ENCODE measurements at regions of chr14 and their contacts with region 1.

Region 1: GRCh38 chr14:105351920-105352851 is 37.6 kb downstream of the PACS2 start:
- DNase-seq: peak; percentile 40
- H3K4me3 ChIP-seq: no peak overlapping the region
- CTCF ChIP-seq: peak; percentile 88

Region 2: DNA sequence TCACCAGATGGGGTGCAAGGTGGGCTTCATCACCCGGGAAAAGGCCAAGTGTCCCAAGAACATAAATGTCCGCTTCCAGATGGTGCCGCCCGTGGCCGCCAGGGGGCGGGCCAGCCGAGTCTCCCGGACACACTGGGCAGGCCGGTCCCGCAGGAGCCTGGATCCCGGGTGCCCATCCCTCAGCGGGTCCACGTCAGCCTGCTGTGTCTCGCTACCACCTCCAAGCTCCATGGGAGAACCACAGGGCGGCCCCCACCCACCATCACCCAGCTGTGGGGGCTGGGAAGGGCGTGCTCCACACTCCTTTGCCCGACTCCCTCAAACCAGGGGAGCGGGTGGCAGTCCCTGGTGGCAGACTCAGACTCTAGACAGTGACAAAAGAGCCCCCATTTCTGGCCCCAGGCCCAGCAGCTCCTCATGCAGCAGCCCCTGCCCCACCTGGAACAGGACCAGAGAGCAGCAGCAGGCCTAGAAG is 149.1 kb before region 1 on chr14:
- CTCF ChIA-PET with region 1: interaction called, 32 read pairs
- POLR2A ChIA-PET with region 1: no interaction called
- DNase-seq: no peak
- H3K4me3 ChIP-seq: 0 out of 2 replicates have a peak overlapping the region, but pooled peaks have one; percentile 3
- CTCF ChIP-seq: peak; percentile 96

Region 3: DNA sequence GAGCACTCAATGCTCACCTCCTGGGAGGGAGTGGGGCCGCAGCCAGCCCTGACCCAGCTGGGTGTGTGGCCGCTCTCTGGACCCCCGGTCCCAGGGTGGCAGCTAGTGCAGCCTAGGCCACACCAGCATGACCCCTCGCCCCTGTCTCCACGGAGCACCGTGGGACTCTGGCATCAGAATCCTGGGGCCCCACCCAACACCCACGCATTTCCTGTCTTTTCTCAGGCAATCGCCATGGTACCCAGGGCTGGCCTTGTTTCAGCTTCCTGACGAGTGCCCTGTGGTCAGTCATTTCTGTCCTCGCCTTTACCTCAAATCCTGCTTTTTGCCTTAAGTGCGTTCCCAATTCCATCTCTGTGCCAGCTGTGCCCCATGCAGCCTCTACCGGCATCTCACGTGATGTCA is 21.7 kb before region 1 on chr14:
- CTCF ChIA-PET with region 1: interaction called, 10 read pairs
- POLR2A ChIA-PET with region 1: interaction called, 4 read pairs
- DNase-seq: no peak
- H3K4me3 ChIP-seq: no peak overlapping the region
- CTCF ChIP-seq: no peak

Region 4: GRCh38 chr14:105340821-105341733 is 11.1 kb before region 1 on chr14:
- CTCF ChIA-PET with region 1: interaction called, 26 read pairs
- POLR2A ChIA-PET with region 1: no interaction called
- DNase-seq: no peak
- H3K4me3 ChIP-seq: no peak overlapping the region
- CTCF ChIP-seq: no peak

Region 5: DNA sequence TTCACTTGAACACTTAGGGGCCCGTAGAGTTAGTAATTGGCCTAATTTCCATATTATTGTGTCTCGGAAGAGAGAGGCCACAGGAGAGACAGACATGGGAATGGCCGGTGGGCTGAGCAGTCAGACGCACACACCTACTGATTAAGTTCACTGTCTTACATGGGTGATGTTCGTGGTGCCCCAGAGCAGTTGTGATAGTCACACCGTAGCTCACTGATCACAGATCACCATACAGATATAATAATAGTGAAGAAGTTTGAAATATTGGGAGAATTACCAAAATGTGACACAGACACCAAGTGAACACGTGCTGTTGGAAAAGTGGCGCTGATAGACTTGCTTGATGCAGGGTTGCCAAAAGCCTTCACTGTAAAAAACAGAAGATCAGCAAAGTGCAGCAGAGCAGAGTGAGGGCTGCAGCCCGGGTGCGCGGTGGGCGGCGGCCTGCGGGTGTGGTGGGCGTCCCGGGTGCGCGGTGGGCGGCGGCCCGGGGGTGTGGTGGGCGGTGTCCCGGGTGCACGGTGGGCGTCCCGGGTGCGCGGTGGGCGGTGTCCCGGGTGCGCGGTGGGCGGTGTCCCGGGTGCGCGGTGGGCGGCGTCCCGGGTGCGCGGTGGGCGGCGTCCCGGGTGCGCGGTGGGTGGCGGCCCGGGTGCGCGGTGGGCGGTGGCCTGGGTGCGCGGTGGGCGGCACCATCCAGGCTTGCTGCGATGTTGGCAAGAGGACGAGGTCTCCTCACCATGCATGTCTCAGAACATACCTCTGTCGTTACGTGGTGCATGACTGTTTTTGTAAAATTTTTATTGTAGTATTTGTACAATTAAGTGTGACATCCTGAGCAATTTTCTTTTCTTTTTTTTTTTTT is 11.9 kb after region 1 on chr14:
- CTCF ChIA-PET with region 1: interaction called, 18 read pairs
- POLR2A ChIA-PET with region 1: no interaction called
- DNase-seq: no peak
- H3K4me3 ChIP-seq: peak overlapping the region; percentile 32
- CTCF ChIP-seq: no peak